ENCODE measurements at regions of chr3 and their contacts with region 1.

Region 1: DNA sequence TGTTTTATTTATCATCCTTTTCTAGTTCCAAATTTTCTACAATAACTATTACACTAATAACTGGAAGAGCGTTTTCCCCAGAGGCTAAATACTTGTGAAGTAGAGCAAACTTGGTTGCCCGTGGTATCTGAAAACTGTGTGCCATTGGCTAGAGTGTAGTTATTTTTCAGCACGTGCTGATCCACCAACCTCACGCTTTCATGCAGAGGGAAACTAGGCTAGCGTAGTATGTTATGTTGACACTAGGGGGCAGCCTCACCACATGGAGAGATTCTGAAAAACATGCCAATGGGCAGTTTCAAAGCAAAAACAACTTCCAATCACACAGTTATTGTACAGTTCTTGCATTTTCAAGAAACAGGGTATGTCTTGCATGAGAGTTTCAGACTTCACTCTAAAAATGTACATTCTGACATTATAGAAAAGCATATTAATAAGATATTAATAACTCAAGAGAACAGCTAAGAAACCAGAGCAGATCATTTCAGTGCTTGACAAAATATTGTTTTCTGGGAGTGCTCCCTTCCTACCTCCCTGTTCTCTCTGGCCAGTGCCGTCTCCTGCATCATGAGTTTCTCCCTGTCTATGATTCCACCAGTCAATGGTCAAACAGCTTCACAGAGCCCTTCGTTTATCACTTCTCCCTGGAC is 39.7 kb downstream of the SPATA12 start:
- DNase-seq: peak; percentile 16
- ATAC-seq: peak; percentile 96
- H3K4me3 ChIP-seq: no peak overlapping the region
- H3K27ac ChIP-seq: no peak overlapping the region
- H3K4me1 ChIP-seq: no peaks in the 10 kb centered on the region
- H3K27me3 ChIP-seq: no peaks in the 10 kb centered on the region
- CTCF ChIP-seq: peak; percentile 73 to 91 (median 84)
- EP300 ChIP-seq: no peak
- POLR2A ChIP-seq: no peak
- RAD21 ChIP-seq: peak; percentile 91

Region 2: DNA sequence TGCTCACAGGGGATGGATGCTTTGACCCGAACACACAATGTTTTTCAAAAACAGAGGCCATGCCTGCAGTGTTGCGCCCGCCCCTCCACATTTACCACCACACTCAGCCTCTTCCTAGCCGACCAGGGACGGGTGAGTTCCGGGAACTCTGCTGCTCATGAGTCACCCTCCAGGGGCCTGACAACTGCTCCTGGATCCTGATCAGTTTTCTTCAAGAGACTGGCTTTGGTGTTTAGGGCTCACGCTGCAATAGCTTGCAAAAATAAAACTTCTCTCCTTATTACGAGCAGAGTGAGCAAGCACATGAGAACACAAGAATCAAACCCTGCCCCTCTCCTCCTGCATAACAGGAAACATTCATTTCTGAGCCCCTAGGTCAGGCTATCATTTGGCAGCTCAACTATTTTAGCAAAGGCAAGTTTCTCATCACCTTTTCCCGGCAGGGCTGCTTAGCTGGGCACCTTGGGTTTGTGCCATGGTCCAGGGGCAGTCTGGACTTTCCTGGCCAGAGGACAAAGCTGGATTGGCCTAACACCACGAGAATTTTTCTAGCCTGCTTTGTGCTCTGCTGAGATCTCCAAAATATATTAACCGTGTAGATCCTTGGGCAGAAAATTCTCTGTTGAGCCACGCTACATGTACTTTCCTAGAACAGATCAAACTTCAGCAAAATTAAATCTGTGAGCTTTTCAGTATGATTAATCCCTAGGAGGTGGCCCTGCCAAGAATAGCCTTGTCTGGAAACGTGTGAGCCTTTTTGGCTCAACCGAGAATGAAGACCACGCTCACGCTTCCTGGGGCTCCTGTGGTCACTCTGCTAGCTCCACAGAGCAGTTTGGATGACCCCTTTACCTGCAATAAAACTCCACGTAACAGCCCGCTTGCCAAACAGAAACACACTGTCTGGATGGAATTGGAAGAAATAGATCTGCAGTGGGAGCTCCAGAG is 92.4 kb before region 1 on chr3:
- CTCF ChIA-PET with region 1: interaction called, 16 read pairs
- POLR2A ChIA-PET with region 1: no interaction called
- RAD21 ChIA-PET with region 1: interaction called, 4 read pairs
- SMC1A ChIA-PET with region 1: interaction called, 5 read pairs
- in situ Hi-C with region 1: no loop called
- intact Hi-C with region 1: no loop called
- DNase-seq: no peak
- ATAC-seq: no peak
- H3K4me3 ChIP-seq: no peak overlapping the region
- H3K27ac ChIP-seq: no peak overlapping the region
- H3K4me1 ChIP-seq: no peaks in the 10 kb centered on the region
- H3K27me3 ChIP-seq: no peaks in the 10 kb centered on the region
- CTCF ChIP-seq: no peak
- EP300 ChIP-seq: no peak
- POLR2A ChIP-seq: no peak
- RAD21 ChIP-seq: no peak

Region 3: DNA sequence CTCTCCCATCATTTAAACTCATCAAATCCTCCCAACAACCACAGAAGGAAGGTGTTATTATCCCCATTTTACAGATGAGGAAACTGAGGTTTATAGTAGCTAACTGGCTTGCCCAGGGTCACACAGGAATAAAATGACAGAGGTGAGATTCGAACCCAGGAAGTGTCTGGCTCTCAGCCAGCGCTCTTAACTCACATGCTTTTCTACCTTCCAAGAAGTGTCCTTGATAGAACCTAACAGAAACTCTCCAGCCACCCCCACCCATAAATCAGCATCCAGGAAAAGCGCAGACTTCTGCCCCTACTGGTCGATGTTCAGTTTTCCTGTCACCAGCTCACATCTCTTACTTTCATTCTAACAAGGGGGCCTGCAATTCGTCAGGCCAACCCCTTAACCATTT is 12.0 kb after region 1 on chr3:
- CTCF ChIA-PET with region 1: interaction called, 21 read pairs
- POLR2A ChIA-PET with region 1: no interaction called
- RAD21 ChIA-PET with region 1: no interaction called
- SMC1A ChIA-PET with region 1: interaction called, 14 read pairs
- in situ Hi-C with region 1: no loop called
- intact Hi-C with region 1: no loop called
- DNase-seq: no peak
- ATAC-seq: peak; percentile 72
- H3K4me3 ChIP-seq: no peak overlapping the region
- H3K27ac ChIP-seq: no peak overlapping the region
- H3K4me1 ChIP-seq: no peaks in the 10 kb centered on the region
- H3K27me3 ChIP-seq: peaks cover 0 to 6% of the 10 kb centered on the region in 2 experiments; a peak in 3 of 4 replicates
- CTCF ChIP-seq: peak; percentile 19 to 49 (median 39); a peak in 3 of 6 replicates
- EP300 ChIP-seq: no peak
- POLR2A ChIP-seq: no peak
- RAD21 ChIP-seq: no peak

Region 4: DNA sequence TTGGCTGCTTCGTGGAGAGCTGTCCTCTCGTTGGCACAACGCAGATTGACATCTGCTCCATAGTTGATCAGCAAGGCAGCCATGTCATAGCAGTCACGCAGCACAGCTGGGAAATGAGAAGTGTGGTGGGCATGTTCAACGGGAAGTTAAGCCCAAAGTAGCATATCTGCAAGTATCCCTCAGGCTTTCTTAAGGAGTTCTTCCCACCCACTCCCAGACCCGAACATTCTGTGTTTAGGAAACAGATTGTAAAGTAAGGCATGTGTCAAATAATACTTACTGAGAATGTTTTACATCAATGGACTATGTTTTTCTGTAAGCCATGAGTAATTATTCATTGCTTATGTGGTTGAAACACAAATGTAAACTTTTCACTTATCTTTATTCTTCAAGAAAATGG is 183.2 kb after region 1 on chr3:
- CTCF ChIA-PET with region 1: no interaction called
- POLR2A ChIA-PET with region 1: no interaction called
- RAD21 ChIA-PET with region 1: no interaction called
- SMC1A ChIA-PET with region 1: no interaction called
- in situ Hi-C with region 1: no loop called
- intact Hi-C with region 1: no loop called
- DNase-seq: no peak
- ATAC-seq: no peak
- H3K4me3 ChIP-seq: no peak overlapping the region
- H3K27ac ChIP-seq: no peak overlapping the region
- H3K4me1 ChIP-seq: no peaks in the 10 kb centered on the region
- H3K27me3 ChIP-seq: no peaks in the 10 kb centered on the region
- CTCF ChIP-seq: no peak
- EP300 ChIP-seq: no peak
- POLR2A ChIP-seq: no peak
- RAD21 ChIP-seq: no peak

Region 5: DNA sequence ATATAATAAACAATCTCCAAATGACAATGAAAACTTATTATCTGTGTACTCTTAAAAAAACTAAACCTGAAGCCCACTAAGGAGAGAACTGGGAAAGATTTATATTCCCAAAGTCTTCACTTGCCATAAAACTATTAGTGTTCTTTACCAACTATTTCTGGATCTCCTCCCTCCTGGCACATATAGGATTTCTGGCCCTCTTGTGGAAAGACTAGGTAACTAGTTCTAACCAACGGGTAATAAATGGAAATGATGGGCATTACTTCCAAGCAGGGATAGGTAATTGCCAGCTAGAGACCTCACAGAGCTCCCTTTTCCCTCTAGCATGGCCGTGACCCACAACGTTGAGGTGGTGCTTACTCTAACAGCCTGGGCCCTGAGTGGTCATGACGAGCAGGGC is 333.9 kb after region 1 on chr3:
- CTCF ChIA-PET with region 1: no interaction called
- POLR2A ChIA-PET with region 1: no interaction called
- RAD21 ChIA-PET with region 1: no interaction called
- SMC1A ChIA-PET with region 1: interaction called, 3 read pairs
- in situ Hi-C with region 1: no loop called
- intact Hi-C with region 1: loop called (anchors 10 kb)
- DNase-seq: no peak
- ATAC-seq: peak; percentile 45; the same call in 2 of the 3 replicates
- H3K4me3 ChIP-seq: no peak overlapping the region
- H3K27ac ChIP-seq: no peak overlapping the region
- H3K4me1 ChIP-seq: no peaks in the 10 kb centered on the region
- H3K27me3 ChIP-seq: no peaks in the 10 kb centered on the region
- CTCF ChIP-seq: peak; percentile 21 to 29 (median 25); a peak in 4 of 6 replicates
- EP300 ChIP-seq: no peak
- POLR2A ChIP-seq: no peak
- RAD21 ChIP-seq: peak; percentile 21; the same call in 1 of the 2 replicates

Region 6: GRCh38 chr3:57500506-57500905 is 400.3 kb after region 1 on chr3:
- CTCF ChIA-PET with region 1: no interaction called
- POLR2A ChIA-PET with region 1: no interaction called
- RAD21 ChIA-PET with region 1: no interaction called
- SMC1A ChIA-PET with region 1: no interaction called
- in situ Hi-C with region 1: no loop called
- intact Hi-C with region 1: no loop called
- DNase-seq: no peak
- ATAC-seq: no peak
- H3K4me3 ChIP-seq: no peak overlapping the region
- H3K27ac ChIP-seq: no peak overlapping the region
- H3K4me1 ChIP-seq: no peaks in the 10 kb centered on the region
- H3K27me3 ChIP-seq: no peaks in the 10 kb centered on the region
- CTCF ChIP-seq: no peak
- EP300 ChIP-seq: no peak
- POLR2A ChIP-seq: no peak
- RAD21 ChIP-seq: no peak

Measured in GM12878 (cell line).